Activated CD4-positive, alpha-beta memory T cell treated with anti-CD3 and anti-CD28 coated beads for 36 hours (primary cell): ENCODE measurements at regions of chr6 and their contacts with region 1.

Region 1: DNA sequence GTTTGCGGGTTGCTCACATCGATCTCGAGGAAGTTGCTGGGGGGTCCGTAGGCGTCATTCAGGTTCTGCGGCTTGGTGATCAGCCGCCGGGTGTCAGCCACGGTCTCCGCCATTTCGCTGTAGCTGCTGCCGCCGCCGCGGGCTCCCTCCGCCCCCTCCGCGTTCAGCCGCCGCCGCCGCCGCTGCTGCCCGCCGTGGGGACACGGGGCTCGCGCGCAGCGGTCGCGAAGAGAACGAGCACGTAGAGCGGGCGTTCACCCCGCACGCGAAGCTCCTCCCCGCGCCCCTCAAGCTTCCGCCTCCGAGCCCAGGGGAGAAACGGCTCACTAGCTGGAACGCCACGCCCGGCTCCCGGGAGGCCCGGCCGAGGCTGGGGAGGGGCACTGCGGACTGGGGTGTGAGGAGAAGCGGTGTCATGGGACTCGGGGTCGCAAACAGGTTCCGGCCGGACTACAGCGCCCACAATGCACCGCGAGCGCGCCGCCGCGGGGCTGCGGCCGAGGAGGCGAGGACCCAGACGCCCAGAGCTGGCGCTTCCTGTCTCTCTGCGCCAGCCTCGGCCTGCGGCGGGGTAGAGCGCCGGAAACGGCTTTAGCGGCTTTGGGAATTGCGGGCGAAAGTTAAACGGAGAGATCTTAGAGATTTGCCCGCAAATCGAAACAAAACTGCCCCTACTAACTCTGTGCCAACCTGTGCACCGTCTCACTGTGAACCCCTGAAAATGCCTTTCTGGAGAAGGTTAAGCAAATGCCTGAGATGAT is at the start of gene SNX3:
- DNase-seq: peak; percentile 94
- H3K4me3 Mint-ChIP-seq: peak within 1 kb of the TSS; percentile 79
- H3K27ac Mint-ChIP-seq: peak within 1 kb of the TSS; percentile 88
- H3K4me1 Mint-ChIP-seq: peaks cover 19% of the 10 kb centered on the region
- H3K27me3 Mint-ChIP-seq: no peaks in the 10 kb centered on the region
- total RNA-seq, gene SNX3: 78.6 to 80.4 TPM

Region 2: DNA sequence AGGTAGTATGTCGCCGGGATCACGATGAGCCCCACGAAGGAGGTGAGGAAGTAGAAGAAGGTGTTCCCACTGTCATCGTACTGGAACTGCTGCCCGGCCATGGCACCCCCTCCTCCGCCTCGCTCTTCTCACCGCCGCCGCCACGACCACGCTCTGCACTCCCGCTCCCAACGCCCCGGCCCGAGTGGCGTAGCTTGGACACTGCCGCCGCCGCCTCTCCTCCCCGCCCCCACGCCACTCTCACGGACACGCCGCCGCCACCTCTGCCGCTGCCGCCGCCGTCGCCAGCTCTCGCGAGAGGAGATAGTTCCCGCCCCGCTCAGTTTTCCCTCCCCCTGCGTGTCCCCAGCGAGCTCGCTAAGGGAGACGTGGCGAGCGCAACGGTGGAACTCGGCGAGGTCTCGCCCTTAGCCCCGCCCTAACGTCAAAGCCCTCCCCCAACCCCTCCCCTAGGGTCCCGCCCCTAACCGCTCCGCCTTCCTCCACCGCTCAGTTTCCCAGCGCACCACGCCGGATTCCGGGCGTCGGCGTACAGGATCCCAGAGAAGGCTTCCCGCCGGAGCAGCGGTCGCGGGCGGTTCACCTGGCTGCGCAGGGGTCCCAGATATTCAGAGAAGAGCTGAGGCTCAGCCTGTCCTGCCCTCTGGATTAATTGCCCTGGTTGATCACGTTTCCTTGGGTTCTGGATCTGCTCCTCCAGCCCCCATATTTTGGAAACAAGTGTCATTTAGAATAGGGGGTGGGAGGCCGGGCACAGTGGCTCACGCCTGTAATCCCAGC is 302.9 kb before region 1 on chr6 and contains the start of gene SEC63:
- CTCF ChIA-PET with region 1: no interaction called
- POLR2A ChIA-PET with region 1: interaction called, 4 read pairs
- intact Hi-C with region 1: loop called (anchors 5 kb)
- DNase-seq: peak; percentile 99
- H3K4me3 Mint-ChIP-seq: peak within 1 kb of the TSS; percentile 100
- H3K27ac Mint-ChIP-seq: peak within 1 kb of the TSS; percentile 95
- H3K4me1 Mint-ChIP-seq: peaks cover 26% of the 10 kb centered on the region
- H3K27me3 Mint-ChIP-seq: no peaks in the 10 kb centered on the region
- total RNA-seq, gene SEC63: 90.6 to 95.9 TPM

Region 3: DNA sequence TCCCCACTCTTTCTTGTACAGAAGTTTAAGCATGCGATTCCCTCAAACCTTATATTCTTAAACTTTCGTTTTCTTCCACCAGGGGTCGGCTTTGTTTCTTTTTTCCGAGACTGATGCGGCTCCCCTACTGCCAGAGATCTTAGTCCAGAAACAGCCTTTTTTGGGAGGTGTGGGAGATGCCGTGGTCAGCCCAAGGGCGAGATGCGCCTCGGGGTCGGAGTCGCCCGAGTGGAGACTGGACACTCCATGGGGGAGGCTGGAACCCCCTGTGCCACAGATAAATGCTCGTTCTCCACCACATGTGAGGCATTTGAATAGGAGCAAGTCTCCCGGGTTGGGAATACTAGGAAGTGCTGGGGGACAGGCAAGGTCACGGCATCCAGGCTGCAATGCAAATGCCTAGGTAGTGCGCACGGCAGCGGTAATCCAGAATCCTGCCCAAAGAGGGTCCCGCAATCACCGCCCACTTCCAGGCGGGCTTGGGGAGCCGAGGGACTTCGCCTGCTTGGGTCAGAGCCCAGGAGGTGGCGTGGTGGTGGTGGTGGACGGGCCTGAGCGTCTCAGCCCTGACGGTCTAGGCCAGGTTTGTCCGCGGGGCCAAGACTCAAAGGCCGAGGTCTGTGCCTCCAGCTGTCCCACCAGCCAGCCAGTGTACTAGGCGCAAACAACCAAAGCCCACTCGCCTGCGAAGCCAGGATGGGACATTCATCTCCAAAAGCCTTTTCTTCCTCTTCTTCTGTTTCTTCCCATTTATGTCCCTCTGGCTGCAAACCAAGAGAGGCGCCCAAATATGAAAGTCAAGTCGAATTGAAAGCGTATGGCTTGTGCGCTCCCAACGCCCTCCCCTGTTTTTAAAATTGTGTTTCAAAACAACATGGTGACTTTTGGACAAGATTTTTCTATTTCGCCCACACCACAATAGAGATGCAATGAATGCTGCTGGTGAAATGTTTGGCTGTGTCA is 147.2 kb before region 1 on chr6:
- CTCF ChIA-PET with region 1: no interaction called
- POLR2A ChIA-PET with region 1: no interaction called
- intact Hi-C with region 1: loop called (anchors 5 kb)
- DNase-seq: peak; percentile 21
- H3K4me3 Mint-ChIP-seq: peak overlapping the region; percentile 46
- H3K27ac Mint-ChIP-seq: no peak overlapping the region
- H3K4me1 Mint-ChIP-seq: peaks cover 43% of the 10 kb centered on the region
- H3K27me3 Mint-ChIP-seq: peaks cover 71% of the 10 kb centered on the region

Region 4: GRCh38 chr6:108133594-108134179 is 127.3 kb before region 1 on chr6:
- CTCF ChIA-PET with region 1: no interaction called
- POLR2A ChIA-PET with region 1: no interaction called
- intact Hi-C with region 1: no loop called
- DNase-seq: peak; percentile 55
- H3K4me3 Mint-ChIP-seq: peak overlapping the region; percentile 72
- H3K27ac Mint-ChIP-seq: no peak overlapping the region
- H3K4me1 Mint-ChIP-seq: peaks cover 9% of the 10 kb centered on the region
- H3K27me3 Mint-ChIP-seq: peaks cover 61% of the 10 kb centered on the region

Region 5: DNA sequence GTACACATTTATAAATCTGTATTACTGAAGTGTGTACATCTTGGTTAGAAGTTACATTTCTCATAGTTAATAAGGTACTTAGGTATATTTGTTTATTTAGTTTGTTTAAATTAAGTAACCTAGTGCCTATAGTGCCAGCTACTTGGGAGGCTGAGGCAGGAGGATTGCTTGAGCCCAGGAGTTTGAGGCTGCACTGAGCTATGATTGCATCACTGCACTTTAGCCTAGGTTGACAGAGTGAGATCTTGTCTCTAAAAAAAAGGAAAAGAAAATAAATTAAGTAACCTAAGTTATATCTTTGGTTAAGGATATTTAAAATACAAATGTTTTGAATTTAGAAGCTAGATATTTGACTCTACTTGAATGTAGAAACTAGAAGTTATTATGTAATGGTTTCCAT is 24.4 kb after region 1 on chr6:
- CTCF ChIA-PET with region 1: no interaction called
- POLR2A ChIA-PET with region 1: no interaction called
- intact Hi-C with region 1: no loop called
- DNase-seq: no peak
- H3K4me3 Mint-ChIP-seq: no peak overlapping the region
- H3K27ac Mint-ChIP-seq: no peak overlapping the region
- H3K4me1 Mint-ChIP-seq: peaks cover 2% of the 10 kb centered on the region
- H3K27me3 Mint-ChIP-seq: no peaks in the 10 kb centered on the region

Region 6: DNA sequence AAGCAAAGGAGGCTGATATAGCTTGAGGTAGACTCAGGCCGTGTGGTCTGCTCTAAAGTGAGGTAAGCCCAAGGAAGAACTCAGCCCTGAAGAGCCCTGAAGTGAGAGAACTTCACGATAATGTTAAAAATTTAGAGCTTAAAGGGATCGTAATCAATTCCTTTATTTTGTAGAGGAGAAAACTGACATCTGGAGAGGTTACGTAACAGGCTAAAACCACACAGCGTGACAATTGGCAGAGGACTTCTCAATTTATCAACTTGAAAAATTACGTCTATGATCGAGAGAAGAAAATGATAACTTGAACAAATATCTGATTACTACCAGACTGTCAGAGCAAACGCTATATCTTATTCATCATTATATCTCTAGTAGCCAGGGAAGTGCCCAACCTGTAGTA is 177.9 kb after region 1 on chr6:
- CTCF ChIA-PET with region 1: no interaction called
- POLR2A ChIA-PET with region 1: no interaction called
- intact Hi-C with region 1: loop called (anchors 2 kb)
- DNase-seq: no peak
- H3K4me3 Mint-ChIP-seq: no peak overlapping the region
- H3K27ac Mint-ChIP-seq: no peak overlapping the region
- H3K4me1 Mint-ChIP-seq: no peaks in the 10 kb centered on the region
- H3K27me3 Mint-ChIP-seq: peaks cover 28% of the 10 kb centered on the region

Region 7: GRCh38 chr6:108558372-108559096 is 297.5 kb after region 1 on chr6:
- CTCF ChIA-PET with region 1: no interaction called
- POLR2A ChIA-PET with region 1: interaction called, 4 read pairs
- intact Hi-C with region 1: loop called (anchors 2 kb)
- DNase-seq: peak; percentile 97
- H3K4me3 Mint-ChIP-seq: peak overlapping the region; percentile 93
- H3K27ac Mint-ChIP-seq: peak overlapping the region; percentile 96
- H3K4me1 Mint-ChIP-seq: peaks cover 25% of the 10 kb centered on the region
- H3K27me3 Mint-ChIP-seq: no peaks in the 10 kb centered on the region